ENCODE measurements at regions of chr3 and their contacts with region 1.

Region 1: GRCh38 chr3:159246385-159246784 is 444.5 kb downstream of the MFSD1 start:
- DNase-seq: no peak
- H3K4me3 ChIP-seq: no peak overlapping the region
- H3K27ac ChIP-seq: no peak overlapping the region
- H3K27me3 ChIP-seq: no peaks in the 10 kb centered on the region
- CTCF ChIP-seq: no peak

Region 2: GRCh38 chr3:159150180-159150579 is 96.2 kb before region 1 on chr3:
- CTCF ChIA-PET with region 1: no interaction called
- POLR2A ChIA-PET with region 1: no interaction called
- DNase-seq: no peak
- H3K4me3 ChIP-seq: no peak overlapping the region
- H3K27ac ChIP-seq: no peak overlapping the region
- H3K27me3 ChIP-seq: no peaks in the 10 kb centered on the region
- CTCF ChIP-seq: no peak

Region 3: DNA sequence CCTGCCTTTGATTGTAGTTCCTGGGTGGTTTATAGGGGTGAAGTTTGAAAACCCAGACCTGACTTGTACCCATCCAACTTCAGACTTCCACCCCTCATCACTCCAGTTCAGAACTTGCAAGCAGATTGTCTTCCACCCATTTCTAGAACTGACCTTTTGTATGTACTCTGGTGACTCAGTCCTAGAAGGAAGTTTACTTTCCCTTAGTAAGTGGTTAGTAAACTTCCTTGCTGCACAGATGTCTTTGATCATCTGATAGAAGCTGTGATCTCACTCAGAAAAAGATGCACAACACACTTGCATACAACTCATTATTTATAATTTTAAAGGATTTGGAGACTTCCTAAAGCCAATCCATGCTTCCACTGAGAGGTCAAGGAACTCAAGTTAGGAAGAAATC is 76.6 kb before region 1 on chr3:
- CTCF ChIA-PET with region 1: interaction called, 4 read pairs
- POLR2A ChIA-PET with region 1: interaction called, 10 read pairs
- DNase-seq: peak; percentile 45
- H3K4me3 ChIP-seq: no peak overlapping the region
- H3K27ac ChIP-seq: no peak overlapping the region
- H3K27me3 ChIP-seq: no peaks in the 10 kb centered on the region
- CTCF ChIP-seq: no peak

Region 4: DNA sequence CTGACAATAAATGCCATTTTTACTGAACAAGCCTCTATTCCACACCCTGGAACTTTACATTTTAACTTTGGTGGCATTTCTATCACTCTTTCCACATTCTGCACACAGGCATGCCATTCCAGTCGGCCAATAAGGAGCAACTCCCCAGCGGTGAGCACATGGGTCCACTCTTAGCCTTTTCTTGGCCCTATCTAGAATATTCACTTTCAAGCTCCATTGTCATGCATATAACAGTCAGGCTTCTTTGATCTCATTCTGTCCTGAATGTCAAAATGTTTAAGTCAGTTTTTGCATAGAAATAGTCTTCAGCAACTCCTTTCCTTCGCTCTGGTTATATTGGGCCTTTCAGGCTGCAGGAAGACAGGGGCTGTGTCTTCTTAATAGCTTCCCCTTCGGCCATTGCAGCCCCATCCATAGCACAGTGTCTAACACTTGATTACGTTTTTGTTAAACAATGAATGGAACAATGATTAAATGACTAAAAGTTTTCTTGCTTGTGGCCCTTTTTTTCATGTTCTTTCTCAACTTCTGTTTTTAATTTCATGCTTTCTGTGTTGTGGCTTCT is 17.2 kb before region 1 on chr3:
- CTCF ChIA-PET with region 1: no interaction called
- POLR2A ChIA-PET with region 1: no interaction called
- DNase-seq: no peak
- H3K4me3 ChIP-seq: no peak overlapping the region
- H3K27ac ChIP-seq: no peak overlapping the region
- H3K27me3 ChIP-seq: no peaks in the 10 kb centered on the region
- CTCF ChIP-seq: no peak